Esophagus muscularis mucosa (tissue), 4 donors: ENCODE measurements at regions of chr19 and their contacts with region 1.

Region 1: DNA sequence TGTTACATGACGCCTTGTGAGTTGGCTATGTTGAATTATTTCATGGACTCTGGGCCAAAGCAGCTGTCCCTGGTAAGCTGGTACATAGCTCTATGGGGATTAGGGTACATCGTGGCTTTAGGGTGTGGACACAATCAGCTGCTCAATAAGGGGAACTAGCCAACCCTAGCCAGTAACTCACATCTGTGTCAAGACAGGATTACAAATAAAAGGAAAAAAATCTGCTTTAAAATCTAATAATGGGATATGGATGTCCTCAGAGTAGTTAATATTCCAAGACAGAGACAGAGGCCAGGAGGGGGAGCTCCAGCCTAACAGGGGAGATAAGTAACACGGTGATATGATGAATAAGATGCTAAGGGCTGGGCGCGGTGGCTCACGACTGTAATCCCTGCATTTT is 21.1 kb upstream of the ZNF766 start:
- DNase-seq: no peak
- H3K4me3 ChIP-seq: no peak overlapping the region
- H3K27ac ChIP-seq: no peak overlapping the region
- H3K4me1 ChIP-seq: no peaks in the 10 kb centered on the region
- H3K27me3 ChIP-seq: no peaks in the 10 kb centered on the region
- CTCF ChIP-seq: peak; percentile 45 to 56 (median 52)
- EP300 ChIP-seq: no peak
- POLR2A ChIP-seq: no peak

Region 2: DNA sequence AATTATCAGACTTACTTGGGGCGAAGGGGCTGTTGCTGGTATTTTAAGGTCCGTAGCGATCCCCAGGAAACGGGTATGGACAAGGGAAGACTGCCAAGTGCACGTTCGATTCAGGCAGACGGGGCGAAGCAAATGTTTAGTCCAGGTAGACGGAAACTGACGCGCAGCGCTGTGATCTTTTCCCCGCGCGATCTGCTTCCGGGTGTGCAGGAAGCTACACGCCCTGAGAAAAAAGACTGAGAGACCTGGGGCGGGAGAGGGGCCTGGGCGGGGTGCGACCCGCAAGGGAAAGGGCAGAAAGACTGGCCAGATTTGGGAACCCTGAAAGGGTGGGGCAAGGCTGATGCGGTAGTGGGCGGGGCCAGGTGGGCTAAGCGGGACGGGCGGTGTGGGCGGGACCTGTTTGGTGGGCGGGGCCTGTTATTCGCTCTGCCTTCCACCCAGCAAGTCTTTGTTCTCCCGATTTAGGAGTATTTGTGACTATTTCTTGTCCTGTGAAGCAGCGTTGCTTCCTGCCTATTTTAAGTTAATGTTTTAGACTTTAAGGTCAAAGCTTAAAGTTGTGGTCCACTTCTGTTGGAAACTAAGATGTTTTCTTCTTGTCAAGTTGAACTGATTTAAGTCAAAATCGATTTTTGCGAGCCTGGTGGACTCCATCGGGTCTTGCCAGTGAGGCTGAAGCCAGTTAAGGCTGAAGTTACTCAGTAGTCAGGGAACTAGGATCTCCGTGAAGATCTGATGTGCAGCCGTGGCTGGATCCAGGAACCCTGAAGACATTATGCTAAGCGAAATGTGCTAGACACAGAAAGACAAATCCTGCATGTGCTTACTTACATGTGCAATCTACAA is 76.7 kb before region 1 on chr19 and contains the start of gene ZNF836:
- intact Hi-C with region 1: no loop called
- DNase-seq: peak; percentile 97
- H3K4me3 ChIP-seq: peak within 1 kb of the TSS; percentile 63 to 87 (median 78)
- H3K27ac ChIP-seq: peak within 1 kb of the TSS; percentile 88 to 90 (median 88)
- H3K4me1 ChIP-seq: peaks cover 11 to 23% (median 20%) of the 10 kb centered on the region in 4 donors
- H3K27me3 ChIP-seq: no peaks in the 10 kb centered on the region
- CTCF ChIP-seq: no peak
- EP300 ChIP-seq: no peak
- POLR2A ChIP-seq: no peak
- total RNA-seq, gene ZNF836: 5.8 to 13.1 (median 9.1) TPM

Region 3: GRCh38 chr19:52749780-52750179 is 501.5 kb after region 1 on chr19:
- intact Hi-C with region 1: loop called (anchors 10 kb)
- DNase-seq: no peak
- H3K4me3 ChIP-seq: no peak overlapping the region
- H3K27ac ChIP-seq: no peak overlapping the region
- H3K4me1 ChIP-seq: peaks cover 0 to 5% (median 3%) of the 10 kb centered on the region in 4 donors
- H3K27me3 ChIP-seq: no peaks in the 10 kb centered on the region
- CTCF ChIP-seq: no peak
- EP300 ChIP-seq: no peak
- POLR2A ChIP-seq: no peak